ENCODE measurements at regions of chr1 and their contacts with region 1.

Region 1: GRCh38 chr1:182084487-182085316 is 23.2 kb upstream of the ZNF648 start:
- DNase-seq: peak; percentile 55 to 83 (median 71)
- ATAC-seq: peak; percentile 84
- H3K4me3 ChIP-seq: no peak overlapping the region
- H3K4me3 Mint-ChIP-seq: no peak overlapping the region
- H3K27ac ChIP-seq: no peak overlapping the region
- H3K27ac Mint-ChIP-seq: peak overlapping the region; percentile 37
- H3K4me1 ChIP-seq: peaks cover 28% of the 10 kb centered on the region
- H3K4me1 Mint-ChIP-seq: peaks cover 35% of the 10 kb centered on the region
- H3K27me3 ChIP-seq: no peaks in the 10 kb centered on the region
- H3K27me3 Mint-ChIP-seq: no peaks in the 10 kb centered on the region
- CTCF ChIP-seq: peak; percentile 74

Region 2: DNA sequence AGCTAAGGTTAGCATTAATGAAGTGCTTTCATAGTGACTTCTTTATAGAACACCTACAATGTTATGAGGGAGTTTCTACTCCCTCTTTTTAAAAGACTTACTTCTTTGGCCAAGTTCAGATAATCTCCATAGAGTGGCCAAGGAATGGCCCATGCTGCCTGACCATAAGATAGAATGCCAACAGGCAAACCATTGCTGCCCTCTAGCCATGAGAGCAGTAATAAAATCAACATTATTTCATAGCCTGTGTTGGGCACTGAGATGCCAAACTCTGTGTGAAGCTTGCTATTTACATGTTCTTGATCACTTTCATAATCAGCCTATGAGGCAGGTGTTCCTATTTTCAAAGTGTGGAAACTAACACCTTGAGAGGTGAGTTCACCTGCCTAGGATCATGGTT is 155.3 kb before region 1 on chr1:
- CTCF ChIA-PET with region 1: no interaction called
- POLR2A ChIA-PET with region 1: no interaction called
- intact Hi-C with region 1: no loop called
- DNase-seq: no peak
- ATAC-seq: no peak
- H3K4me3 ChIP-seq: no peak overlapping the region
- H3K4me3 Mint-ChIP-seq: no peak overlapping the region
- H3K27ac ChIP-seq: no peak overlapping the region
- H3K27ac Mint-ChIP-seq: no peak overlapping the region
- H3K4me1 ChIP-seq: no peaks in the 10 kb centered on the region
- H3K4me1 Mint-ChIP-seq: no peaks in the 10 kb centered on the region
- H3K27me3 ChIP-seq: peaks cover 0 to 4% of the 10 kb centered on the region in 2 experiments
- H3K27me3 Mint-ChIP-seq: peaks cover 13% of the 10 kb centered on the region
- CTCF ChIP-seq: no peak

Region 3: GRCh38 chr1:181947441-181947840 is 137.3 kb before region 1 on chr1:
- CTCF ChIA-PET with region 1: no interaction called
- POLR2A ChIA-PET with region 1: no interaction called
- intact Hi-C with region 1: no loop called
- DNase-seq: no peak
- ATAC-seq: no peak
- H3K4me3 ChIP-seq: no peak overlapping the region
- H3K4me3 Mint-ChIP-seq: no peak overlapping the region
- H3K27ac ChIP-seq: no peak overlapping the region
- H3K27ac Mint-ChIP-seq: no peak overlapping the region
- H3K4me1 ChIP-seq: no peaks in the 10 kb centered on the region
- H3K4me1 Mint-ChIP-seq: no peaks in the 10 kb centered on the region
- H3K27me3 ChIP-seq: no peaks in the 10 kb centered on the region
- H3K27me3 Mint-ChIP-seq: peaks cover 22% of the 10 kb centered on the region
- CTCF ChIP-seq: no peak

Region 4: DNA sequence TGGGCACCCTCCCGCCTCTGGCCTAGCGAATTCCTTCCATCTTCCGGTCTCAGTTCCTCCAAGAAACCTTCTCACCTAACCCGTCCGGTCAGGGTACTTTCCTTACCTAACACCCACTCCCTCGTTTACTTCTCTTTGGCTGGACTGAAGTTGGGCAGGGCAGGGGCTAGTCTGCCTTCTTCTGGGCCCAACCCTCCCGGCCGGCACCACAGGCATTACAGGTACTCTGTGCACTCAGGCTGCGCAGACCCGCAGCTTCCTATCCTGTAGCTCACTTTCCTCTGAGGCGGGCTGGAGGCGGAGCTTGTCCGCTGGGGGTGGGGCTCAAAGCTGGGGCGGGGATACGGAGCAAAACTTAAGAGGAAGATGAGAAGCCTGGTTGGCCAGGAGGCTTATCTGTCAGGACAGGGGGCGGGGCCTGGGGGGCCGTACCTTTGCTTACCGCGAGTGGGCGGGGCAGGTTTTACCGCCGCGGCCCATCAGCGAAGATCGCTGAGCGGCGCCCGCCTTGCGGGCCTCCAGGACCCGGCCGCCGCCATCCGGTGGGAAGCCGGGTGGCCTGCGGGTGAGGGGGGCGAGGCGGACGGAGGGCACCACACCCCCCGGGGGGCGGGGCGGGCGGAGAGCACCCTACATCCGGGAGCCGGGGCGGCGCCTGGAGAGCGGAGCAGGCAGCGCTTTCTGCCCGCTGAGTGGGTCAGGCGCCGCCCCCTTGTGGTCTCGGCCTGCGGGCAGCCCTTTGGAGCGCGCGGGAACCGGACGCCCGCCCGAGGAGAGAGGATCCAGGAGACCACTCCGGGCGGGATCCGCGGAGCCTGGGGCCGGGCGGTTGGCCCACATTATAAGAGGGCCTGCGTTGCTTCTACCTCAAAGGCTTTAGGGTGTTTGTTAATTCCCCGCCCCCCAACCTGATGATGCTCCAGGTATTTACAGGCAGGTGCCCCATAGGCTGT is 55.0 kb before region 1 on chr1:
- CTCF ChIA-PET with region 1: no interaction called
- POLR2A ChIA-PET with region 1: no interaction called
- intact Hi-C with region 1: loop called in 1 of 2 experiments (anchors 5 kb)
- DNase-seq: peak; percentile 96 to 99 (median 98)
- ATAC-seq: peak; percentile 93
- H3K4me3 ChIP-seq: peak overlapping the region; percentile 76 to 77
- H3K4me3 Mint-ChIP-seq: peak overlapping the region; percentile 93
- H3K27ac ChIP-seq: peak overlapping the region; percentile 68 to 84
- H3K27ac Mint-ChIP-seq: peak overlapping the region; percentile 98
- H3K4me1 ChIP-seq: peaks cover 16% of the 10 kb centered on the region
- H3K4me1 Mint-ChIP-seq: peaks cover 18% of the 10 kb centered on the region
- H3K27me3 ChIP-seq: no peaks in the 10 kb centered on the region
- H3K27me3 Mint-ChIP-seq: no peaks in the 10 kb centered on the region
- CTCF ChIP-seq: no peak

Region 5: GRCh38 chr1:182337736-182338571 is 253.3 kb after region 1 on chr1:
- CTCF ChIA-PET with region 1: no interaction called
- POLR2A ChIA-PET with region 1: no interaction called
- intact Hi-C with region 1: no loop called
- DNase-seq: no peak
- ATAC-seq: no peak
- H3K4me3 ChIP-seq: no peak overlapping the region
- H3K4me3 Mint-ChIP-seq: no peak overlapping the region
- H3K27ac ChIP-seq: no peak overlapping the region
- H3K27ac Mint-ChIP-seq: no peak overlapping the region
- H3K4me1 ChIP-seq: no peaks in the 10 kb centered on the region
- H3K4me1 Mint-ChIP-seq: no peaks in the 10 kb centered on the region
- H3K27me3 ChIP-seq: no peaks in the 10 kb centered on the region
- H3K27me3 Mint-ChIP-seq: no peaks in the 10 kb centered on the region
- CTCF ChIP-seq: no peak

Region 6: DNA sequence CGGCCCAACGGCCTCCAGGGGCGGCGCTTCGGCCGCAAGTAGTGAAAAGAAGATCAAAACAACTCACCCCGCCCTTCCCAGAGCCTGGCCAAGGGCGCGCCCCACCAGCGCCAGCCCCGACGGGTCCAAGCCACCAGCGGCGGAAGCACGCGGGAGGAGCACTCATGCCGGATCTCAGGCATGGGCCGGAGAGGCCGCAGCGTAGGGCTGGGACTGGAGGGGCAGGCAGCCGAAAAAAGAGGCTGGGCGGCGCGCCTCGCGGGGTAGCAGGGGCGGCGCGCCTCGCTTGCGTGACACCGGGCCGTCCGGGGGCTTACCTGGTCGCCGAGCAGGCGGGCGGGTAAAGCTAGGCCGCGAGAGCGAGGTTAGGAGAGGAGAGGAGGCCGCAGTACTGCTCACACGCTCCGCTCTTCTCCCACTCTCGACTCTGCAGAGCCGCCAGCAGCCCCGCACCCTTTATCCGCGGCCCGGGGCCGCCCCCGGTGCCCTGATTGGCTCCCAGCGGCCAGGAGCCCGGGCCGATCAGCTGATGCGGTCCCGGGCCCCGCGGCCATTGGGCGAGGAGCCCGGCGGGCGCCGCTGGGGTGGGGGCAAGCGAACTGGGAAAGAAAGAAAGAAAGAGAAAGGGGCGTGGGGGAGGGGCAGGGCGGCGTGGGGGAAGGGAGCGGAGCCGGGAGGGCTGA is 306.8 kb after region 1 on chr1 and contains the start of gene GLUL:
- CTCF ChIA-PET with region 1: interaction called, 63 read pairs
- POLR2A ChIA-PET with region 1: interaction called, 3 read pairs
- intact Hi-C with region 1: loop called (anchors 1 kb)
- DNase-seq: peak; percentile 24 to 80 (median 55)
- ATAC-seq: peak; percentile 64
- H3K4me3 ChIP-seq: peak within 1 kb of the TSS; percentile 62 to 76
- H3K4me3 Mint-ChIP-seq: peak within 1 kb of the TSS; percentile 92
- H3K27ac ChIP-seq: peak within 1 kb of the TSS; percentile 32 to 36
- H3K27ac Mint-ChIP-seq: peak within 1 kb of the TSS; percentile 80
- H3K4me1 ChIP-seq: peaks cover 13% of the 10 kb centered on the region
- H3K4me1 Mint-ChIP-seq: peaks cover 25% of the 10 kb centered on the region
- H3K27me3 ChIP-seq: peaks cover 0 to 2% of the 10 kb centered on the region in 2 experiments
- H3K27me3 Mint-ChIP-seq: peaks cover 19% of the 10 kb centered on the region
- CTCF ChIP-seq: no peak
- total RNA-seq, gene GLUL: 27.3 to 29.7 TPM

Region 7: DNA sequence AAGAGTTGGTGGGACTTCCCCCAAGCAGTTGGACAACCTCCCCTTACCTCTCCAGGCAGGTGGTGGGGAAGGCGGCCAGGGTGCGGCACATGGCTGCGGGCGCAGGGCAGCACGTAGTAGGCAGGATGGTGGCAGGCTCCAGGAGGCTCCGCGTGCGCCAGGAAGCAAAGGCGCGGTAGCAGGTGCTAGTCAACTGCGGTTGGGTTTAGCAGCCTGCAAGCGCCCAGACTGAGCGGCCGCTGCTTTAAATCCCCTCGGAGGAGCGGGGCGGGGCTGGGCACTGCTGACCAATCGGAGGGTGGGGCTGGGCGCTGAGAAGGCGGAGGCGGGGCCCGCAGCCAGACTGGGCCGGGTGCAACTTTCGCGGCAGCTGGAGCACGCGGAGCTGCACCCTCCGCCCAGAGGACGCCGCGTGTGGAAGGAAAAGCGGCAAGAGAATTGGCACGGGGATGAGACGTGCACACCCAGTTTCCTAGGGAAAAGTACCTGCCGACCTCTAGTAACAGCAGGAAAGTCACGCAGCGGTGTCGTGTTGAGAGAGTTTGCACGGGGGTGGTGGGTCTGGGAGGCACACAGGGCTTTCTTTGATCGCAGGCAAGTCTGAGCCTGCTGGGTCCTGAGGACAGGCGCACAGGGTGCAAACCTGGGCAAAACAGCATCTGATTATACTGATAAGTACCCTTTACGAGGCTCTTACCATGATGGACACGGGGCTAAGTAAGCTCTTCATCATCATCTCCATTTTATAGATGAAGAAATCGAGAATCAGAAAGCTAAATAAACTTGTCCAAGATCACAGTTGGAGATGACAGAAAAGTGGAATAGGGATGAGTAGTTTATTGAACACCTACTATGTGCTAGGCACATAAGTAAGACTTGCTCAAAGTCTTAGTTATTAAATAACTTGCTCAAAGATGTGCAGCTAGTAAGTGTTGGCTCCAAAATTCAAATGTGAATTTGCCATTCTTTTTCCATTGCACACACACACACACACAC is 519.8 kb after region 1 on chr1 and contains the start of gene RGS16:
- CTCF ChIA-PET with region 1: no interaction called
- POLR2A ChIA-PET with region 1: no interaction called
- intact Hi-C with region 1: loop called in 1 of 2 experiments (anchors 5 kb)
- DNase-seq: peak; percentile 74 to 94 (median 87)
- ATAC-seq: peak; percentile 91
- H3K4me3 ChIP-seq: peak within 1 kb of the TSS; percentile 18 to 45
- H3K4me3 Mint-ChIP-seq: peak within 1 kb of the TSS; percentile 78
- H3K27ac ChIP-seq: no peak within 1 kb of the TSS
- H3K27ac Mint-ChIP-seq: peak within 1 kb of the TSS; percentile 81
- H3K4me1 ChIP-seq: peaks cover 16% of the 10 kb centered on the region
- H3K4me1 Mint-ChIP-seq: peaks cover 17% of the 10 kb centered on the region
- H3K27me3 ChIP-seq: peaks cover 0 to 6% of the 10 kb centered on the region in 2 experiments
- H3K27me3 Mint-ChIP-seq: peaks cover 24% of the 10 kb centered on the region
- CTCF ChIP-seq: no peak
- total RNA-seq, gene RGS16: 11.6 to 12.0 TPM

Region 8: GRCh38 chr1:182789138-182790076 is 704.7 kb after region 1 on chr1 and contains the start of gene NPL:
- CTCF ChIA-PET with region 1: interaction called, 5 read pairs
- POLR2A ChIA-PET with region 1: no interaction called
- intact Hi-C with region 1: loop called (anchors 2 to 5 kb)
- DNase-seq: peak; percentile 65 to 92 (median 83)
- ATAC-seq: peak; percentile 96
- H3K4me3 ChIP-seq: peak within 1 kb of the TSS; percentile 69 to 75
- H3K4me3 Mint-ChIP-seq: peak within 1 kb of the TSS; percentile 91
- H3K27ac ChIP-seq: peak within 1 kb of the TSS; percentile 45 to 57
- H3K27ac Mint-ChIP-seq: peak within 1 kb of the TSS; percentile 76
- H3K4me1 ChIP-seq: peaks cover 12% of the 10 kb centered on the region
- H3K4me1 Mint-ChIP-seq: peaks cover 14% of the 10 kb centered on the region
- H3K27me3 ChIP-seq: no peaks in the 10 kb centered on the region
- H3K27me3 Mint-ChIP-seq: no peaks in the 10 kb centered on the region
- CTCF ChIP-seq: no peak
- total RNA-seq, gene NPL: 1.3 to 2.1 TPM